Panc1 (cell line): ENCODE measurements at regions of chr6 and their contacts with region 1.

Region 1: DNA sequence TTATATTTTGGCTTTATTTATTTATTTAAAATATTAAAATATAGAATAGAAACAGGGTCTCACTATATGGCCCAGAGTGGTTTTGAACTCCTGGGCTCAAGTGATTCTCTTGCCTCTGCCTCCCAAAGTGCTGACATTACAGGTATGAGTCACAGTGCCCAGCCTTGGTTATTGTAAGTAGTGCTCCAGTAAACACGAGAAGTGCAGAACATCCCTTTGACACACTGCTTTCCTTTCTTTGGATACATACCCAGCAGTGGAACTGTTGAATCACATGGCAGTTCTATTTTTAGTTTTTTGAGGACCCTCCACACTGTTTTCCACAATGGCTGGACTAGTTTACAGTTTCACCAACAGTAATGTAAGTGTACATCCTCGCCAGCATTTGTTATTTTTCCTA is 203.9 kb downstream of the PHF3 start:
- DNase-seq: no peak
- ATAC-seq: no peak
- H3K4me3 ChIP-seq: no peak overlapping the region
- H3K27ac ChIP-seq: no peak overlapping the region
- H3K4me1 ChIP-seq: no peaks in the 10 kb centered on the region
- H3K27me3 ChIP-seq: no peaks in the 10 kb centered on the region
- CTCF ChIP-seq: no peak

Region 2: DNA sequence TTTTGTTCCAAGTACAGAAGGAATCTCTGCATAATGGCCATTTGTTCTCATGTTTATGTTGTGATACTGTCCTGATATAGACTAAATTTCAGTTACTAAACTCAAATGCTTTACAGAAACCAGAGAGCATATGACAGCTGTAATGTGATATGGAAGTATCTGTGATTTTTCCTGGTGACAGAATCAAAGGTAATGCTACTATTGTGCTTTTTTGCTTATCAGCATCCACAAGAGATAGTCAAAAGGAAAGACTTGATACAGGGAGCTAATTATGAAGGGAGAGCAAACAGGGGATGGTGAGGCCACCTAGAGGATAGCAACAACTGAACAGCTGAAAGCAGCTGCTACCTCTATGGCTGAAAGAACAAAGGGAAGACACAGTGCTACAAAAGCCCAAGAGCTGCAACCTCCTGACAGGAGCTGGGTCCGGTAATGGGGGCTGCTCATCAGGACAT is 22.5 kb before region 1 on chr6:
- CTCF ChIA-PET with region 1: no interaction called
- POLR2A ChIA-PET with region 1: no interaction called
- in situ Hi-C with region 1: no loop called
- intact Hi-C with region 1: loop called (anchors 1 kb)
- DNase-seq: no peak
- ATAC-seq: peak; percentile 63; the same call in 1 of the 2 replicates
- H3K4me3 ChIP-seq: no peak overlapping the region
- H3K27ac ChIP-seq: no peak overlapping the region
- H3K4me1 ChIP-seq: no peaks in the 10 kb centered on the region
- H3K27me3 ChIP-seq: no peaks in the 10 kb centered on the region
- CTCF ChIP-seq: peak; percentile 20; the same call in 1 of the 2 replicates